HCT116 (cell line): ENCODE measurements at regions of chr10 and their contacts with region 1.

Region 1: DNA sequence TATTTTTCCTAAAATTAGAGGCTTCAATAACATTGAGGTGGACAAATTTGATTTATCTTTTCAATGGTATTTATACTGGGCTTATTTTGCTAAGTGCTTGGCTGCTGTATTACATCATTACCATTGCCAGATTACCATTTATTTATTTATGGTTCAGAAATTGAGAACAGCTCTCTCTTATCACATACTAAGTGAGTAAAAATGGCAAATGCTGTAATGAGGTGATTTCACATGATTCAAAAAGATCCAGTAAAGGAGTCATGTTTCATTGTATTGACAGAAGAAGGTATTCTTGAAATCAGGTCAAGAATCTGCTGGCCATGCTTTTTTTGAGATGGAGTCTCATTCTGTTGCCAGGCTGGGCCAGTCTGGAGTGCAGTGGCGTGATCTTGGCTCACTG is 322.6 kb downstream of the KIF20B start:
- DNase-seq: no peak
- ATAC-seq: no peak
- H3K4me3 ChIP-seq: no peak overlapping the region
- H3K27ac ChIP-seq: no peak overlapping the region
- H3K4me1 ChIP-seq: no peaks in the 10 kb centered on the region
- H3K27me3 ChIP-seq: no peaks in the 10 kb centered on the region
- CTCF ChIP-seq: no peak
- POLR2A ChIP-seq: no peak
- RAD21 ChIP-seq: no peak

Region 2: DNA sequence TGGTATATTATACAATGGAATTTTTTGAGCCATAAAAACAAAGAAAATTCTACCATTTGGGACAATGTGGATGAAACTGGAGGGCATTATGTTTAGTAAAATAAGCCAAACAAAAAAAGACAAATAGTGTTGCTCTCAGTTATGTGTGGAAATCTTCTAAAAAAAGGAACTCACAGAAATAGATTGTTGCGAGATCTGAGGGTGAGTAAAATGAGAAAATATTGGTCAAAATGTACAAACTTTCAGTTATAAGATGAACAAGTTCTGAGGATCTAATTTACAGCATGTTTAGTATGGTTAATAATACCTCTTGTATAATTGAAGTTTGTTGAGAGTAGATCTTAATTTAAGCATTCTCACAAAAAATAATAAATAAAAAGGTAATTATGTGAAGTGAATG is 31.4 kb before region 1 on chr10:
- CTCF ChIA-PET with region 1: no interaction called
- POLR2A ChIA-PET with region 1: no interaction called
- RAD21 ChIA-PET with region 1: no interaction called
- intact Hi-C with region 1: loop called (anchors 2 kb)
- DNase-seq: no peak
- ATAC-seq: no peak
- H3K4me3 ChIP-seq: no peak overlapping the region
- H3K27ac ChIP-seq: no peak overlapping the region
- H3K4me1 ChIP-seq: no peaks in the 10 kb centered on the region
- H3K27me3 ChIP-seq: no peaks in the 10 kb centered on the region
- CTCF ChIP-seq: no peak
- POLR2A ChIP-seq: no peak
- RAD21 ChIP-seq: no peak

Region 3: DNA sequence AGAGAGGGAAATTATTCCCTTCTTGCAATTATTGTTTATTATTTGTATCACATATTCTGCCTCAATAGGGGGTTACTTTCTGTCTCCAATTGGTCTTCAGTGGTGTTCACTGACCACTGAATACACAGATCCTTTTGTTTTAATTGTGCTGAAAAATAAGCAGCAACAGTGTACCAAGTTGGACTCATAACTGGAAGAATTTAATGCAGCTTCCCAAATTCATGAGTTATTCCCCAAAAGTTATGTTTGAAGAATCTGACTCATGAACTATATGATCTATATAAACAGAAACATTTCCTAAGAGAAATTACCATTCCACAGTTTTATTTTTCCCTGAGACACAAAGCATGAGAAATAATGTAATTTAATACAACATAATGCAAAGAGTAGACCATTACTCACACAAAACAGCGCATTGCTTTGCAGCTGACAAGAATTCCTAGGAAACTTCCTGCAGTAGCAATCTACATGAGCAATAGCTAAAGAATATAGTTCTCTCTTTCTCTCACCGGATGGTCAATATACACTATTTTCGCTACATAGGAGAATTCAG is 354.6 kb after region 1 on chr10:
- CTCF ChIA-PET with region 1: no interaction called
- POLR2A ChIA-PET with region 1: no interaction called
- RAD21 ChIA-PET with region 1: no interaction called
- intact Hi-C with region 1: no loop called
- DNase-seq: no peak
- ATAC-seq: no peak
- H3K4me3 ChIP-seq: no peak overlapping the region
- H3K27ac ChIP-seq: no peak overlapping the region
- H3K4me1 ChIP-seq: no peaks in the 10 kb centered on the region
- H3K27me3 ChIP-seq: no peaks in the 10 kb centered on the region
- CTCF ChIP-seq: no peak
- POLR2A ChIP-seq: no peak
- RAD21 ChIP-seq: no peak